Pancreas (tissue), 10 donors: ENCODE measurements at regions of chr11 and their contacts with region 1.

Region 1: DNA sequence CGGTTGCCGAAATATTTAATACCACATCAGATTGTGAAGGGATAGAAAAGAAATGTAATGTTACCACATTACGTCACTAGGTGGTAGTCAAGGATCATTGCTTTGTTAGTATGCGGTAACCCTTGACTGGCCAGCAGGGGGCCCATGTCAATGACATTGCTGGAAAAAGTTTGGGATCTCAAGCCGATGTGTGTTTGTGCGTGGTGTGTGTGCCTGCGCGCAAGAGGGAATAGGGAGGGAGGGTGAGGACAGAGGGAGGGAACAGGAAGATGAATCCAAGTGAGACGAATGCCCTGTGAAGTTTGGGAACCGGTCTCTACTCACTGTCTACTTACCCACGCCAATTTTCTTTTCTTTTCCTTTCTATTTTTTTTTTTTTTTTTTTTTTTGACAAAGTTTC is 10.7 kb upstream of the MRGPRX2 start:
- DNase-seq: peak; percentile 63 to 81 (median 78)
- ATAC-seq: peak; percentile 81 to 98 (median 96)
- H3K4me3 ChIP-seq: no peak overlapping the region
- H3K27ac ChIP-seq: no peak overlapping the region
- H3K4me1 ChIP-seq: peaks cover 0 to 7% (median 5%) of the 10 kb centered on the region in 3 donors
- H3K27me3 ChIP-seq: no peaks in the 10 kb centered on the region
- CTCF ChIP-seq: peak; percentile 77 to 96 (median 90)

Region 2: GRCh38 chr11:19240420-19241259 is 169.4 kb after region 1 on chr11 and contains the start of gene E2F8:
- intact Hi-C with region 1: loop called in 1 of 3 experiments (anchors 10 kb)
- DNase-seq: peak; percentile 88 to 94 (median 92)
- ATAC-seq: peak; percentile 97 to 98 (median 98)
- H3K4me3 ChIP-seq: peak within 1 kb of the TSS; percentile 42 to 74 (median 52)
- H3K27ac ChIP-seq: no peak within 1 kb of the TSS
- H3K4me1 ChIP-seq: peaks cover 0 to 12% (median 9%) of the 10 kb centered on the region in 3 donors
- H3K27me3 ChIP-seq: peaks cover 0 to 19% (median 5%) of the 10 kb centered on the region in 4 donors
- CTCF ChIP-seq: no peak
- total RNA-seq, gene E2F8: 0.06 to 0.44 (median 0.15) TPM in 3 of 6 donors, not detected in the others

Region 3: DNA sequence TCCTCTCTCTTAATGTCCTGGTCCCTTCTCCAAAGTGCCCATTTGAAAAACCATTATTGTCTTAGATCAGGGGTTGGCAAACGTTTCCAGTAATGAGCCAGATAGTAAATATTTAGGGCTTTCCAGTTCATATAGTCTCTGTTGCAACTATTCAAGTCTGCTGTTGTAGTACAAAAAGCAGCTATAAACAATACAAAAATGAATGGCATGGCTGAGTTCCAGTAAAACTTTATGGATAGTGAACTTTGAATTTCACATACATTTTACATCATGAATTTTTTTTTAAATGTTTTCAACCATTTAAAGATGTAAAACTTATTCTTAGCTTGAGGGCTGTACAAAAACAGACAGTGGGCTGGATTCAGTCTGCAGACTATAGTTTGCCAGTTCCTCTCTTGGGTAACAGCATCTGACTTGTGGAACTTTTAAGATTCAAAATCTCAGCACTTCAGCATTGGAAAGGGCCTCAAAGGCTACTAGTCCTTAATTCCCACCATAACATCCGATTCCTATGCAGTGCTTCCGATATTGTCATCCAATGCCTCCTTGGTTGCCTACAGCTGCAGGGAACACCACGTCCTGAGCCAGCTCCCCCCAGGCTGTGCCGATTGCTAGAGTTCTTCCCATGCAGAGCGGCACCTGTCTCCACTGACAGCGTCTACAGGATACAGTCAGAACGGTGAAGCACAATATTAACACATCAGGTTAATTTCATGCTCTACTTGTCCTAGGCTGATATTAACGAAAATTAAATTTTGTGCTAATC is 235.1 kb after region 1 on chr11:
- intact Hi-C with region 1: loop called in 2 of 3 experiments (anchors 5 to 10 kb)
- DNase-seq: no peak
- ATAC-seq: no peak
- H3K4me3 ChIP-seq: no peak overlapping the region
- H3K27ac ChIP-seq: no peak overlapping the region
- H3K4me1 ChIP-seq: no peaks in the 10 kb centered on the region
- H3K27me3 ChIP-seq: no peaks in the 10 kb centered on the region
- CTCF ChIP-seq: no peak

Region 4: DNA sequence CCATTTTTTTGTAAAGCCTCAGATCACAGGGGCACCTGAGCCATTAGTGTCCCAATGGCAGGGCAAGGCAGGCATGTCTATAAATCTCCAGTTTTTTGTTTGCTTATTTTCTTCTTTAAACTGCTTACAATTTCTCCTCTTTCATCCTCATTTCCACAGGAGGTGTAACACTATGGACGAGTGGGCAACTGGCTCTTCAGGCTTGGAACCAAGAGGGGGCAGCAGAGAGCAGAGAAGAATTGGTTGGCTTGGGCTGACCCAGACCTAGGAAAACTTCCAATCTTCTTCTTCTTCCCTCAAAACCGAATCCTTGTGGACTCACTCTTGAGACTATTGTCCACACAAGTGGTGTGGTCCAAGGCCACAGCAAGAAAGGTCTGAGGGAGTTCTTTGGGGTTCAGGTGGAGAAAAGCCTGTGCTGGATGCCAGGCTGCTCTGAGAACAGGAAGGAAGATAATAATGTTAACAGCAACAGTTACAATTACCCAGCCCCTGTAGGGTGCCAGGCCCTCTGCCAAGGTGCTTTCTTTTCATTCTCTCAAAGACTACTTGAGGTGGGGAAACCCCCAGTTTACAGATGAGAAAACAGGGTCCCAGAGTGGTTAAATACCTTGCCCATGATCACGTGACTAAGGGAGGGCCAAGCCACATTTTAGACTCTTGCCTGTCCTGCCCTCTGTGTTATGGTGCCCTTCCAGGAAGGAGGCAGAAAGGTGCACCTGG is 240.2 kb after region 1 on chr11:
- intact Hi-C with region 1: loop called in 2 of 3 experiments (anchors 5 to 10 kb)
- DNase-seq: peak in 5 of 6 donors; percentile 43 to 82 (median 64)
- ATAC-seq: peak; percentile 86 to 96 (median 94)
- H3K4me3 ChIP-seq: no peak overlapping the region
- H3K27ac ChIP-seq: no peak overlapping the region
- H3K4me1 ChIP-seq: no peaks in the 10 kb centered on the region
- H3K27me3 ChIP-seq: no peaks in the 10 kb centered on the region
- CTCF ChIP-seq: peak; percentile 68 to 82 (median 76)

Region 5: GRCh38 chr11:19553683-19554333 is 482.6 kb after region 1 on chr11:
- intact Hi-C with region 1: loop called in 2 of 3 experiments (anchors 2 to 5 kb)
- DNase-seq: peak; percentile 62 to 95 (median 88)
- ATAC-seq: peak; percentile 86 to 93 (median 90)
- H3K4me3 ChIP-seq: no peak overlapping the region
- H3K27ac ChIP-seq: no peak overlapping the region
- H3K4me1 ChIP-seq: no peaks in the 10 kb centered on the region
- H3K27me3 ChIP-seq: no peaks in the 10 kb centered on the region
- CTCF ChIP-seq: peak; percentile 72 to 87 (median 79)